Activated naive CD4-positive, alpha-beta T cell treated with anti-CD3 and anti-CD28 coated beads, Interleukin-2, amount 10 ng/mL, durations not matched to agents 7 days and 5 days (primary cell): ENCODE measurements at regions of chr20 and their contacts with region 1.

Region 1: GRCh38 chr20:16810216-16810615 is 62.1 kb downstream of the OTOR start:
- DNase-seq: no peak
- H3K4me3 Mint-ChIP-seq: no peak overlapping the region
- H3K27ac Mint-ChIP-seq: no peak overlapping the region
- H3K4me1 Mint-ChIP-seq: no peaks in the 10 kb centered on the region
- H3K27me3 Mint-ChIP-seq: peaks cover 13% of the 10 kb centered on the region

Region 2: GRCh38 chr20:16821211-16822089 is 11.2 kb after region 1 on chr20:
- CTCF ChIA-PET with region 1: interaction called, 19 read pairs
- DNase-seq: peak; percentile 38
- H3K4me3 Mint-ChIP-seq: no peak overlapping the region
- H3K27ac Mint-ChIP-seq: peak overlapping the region; percentile 28
- H3K4me1 Mint-ChIP-seq: no peaks in the 10 kb centered on the region
- H3K27me3 Mint-ChIP-seq: peaks cover 9% of the 10 kb centered on the region